ENCODE measurements at regions of chr1 and their contacts with region 1.

Region 1: GRCh38 chr1:200620273-200621131 is at the start of gene KIF14:
- DNase-seq: peak; percentile 97
- ATAC-seq: peak; percentile 99 to 100
- H3K4me3 ChIP-seq: peak within 1 kb of the TSS; percentile 66
- H3K27ac ChIP-seq: peak within 1 kb of the TSS; percentile 74
- H3K4me1 ChIP-seq: peaks cover 18% of the 10 kb centered on the region
- H3K27me3 ChIP-seq: no peaks in the 10 kb centered on the region
- CTCF ChIP-seq: no peak
- total RNA-seq, gene KIF14: 0.44 TPM

Region 2: DNA sequence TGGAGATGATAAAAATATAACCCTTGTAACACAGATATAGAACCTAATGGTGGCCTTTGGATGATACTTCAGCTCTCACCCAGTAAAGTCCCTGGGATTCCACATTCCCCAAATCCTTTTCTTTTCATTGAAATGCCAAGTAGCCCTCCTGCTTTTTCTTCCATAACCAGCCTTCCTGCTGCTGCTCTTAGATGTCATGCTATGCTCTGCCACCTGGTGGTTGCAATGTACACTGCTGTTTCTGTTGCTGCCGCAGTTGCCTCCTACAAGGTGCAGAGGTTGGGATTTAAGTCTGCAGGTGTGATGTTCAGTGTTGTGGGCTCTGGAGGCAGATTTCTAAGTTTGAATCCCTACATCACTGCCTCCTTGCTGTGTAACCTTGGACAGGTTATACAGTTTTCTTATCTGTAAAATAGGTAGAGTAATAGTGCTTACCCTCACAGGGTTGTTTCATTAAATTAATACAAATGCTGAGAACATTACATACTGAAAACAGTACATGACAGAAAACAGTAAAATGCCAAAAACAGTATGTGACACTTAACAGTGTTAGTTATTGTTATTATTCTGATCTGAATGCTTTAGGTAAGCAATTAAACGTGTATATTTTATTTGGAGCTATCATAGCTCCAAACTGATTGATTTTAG is 182.5 kb after region 1 on chr1:
- intact Hi-C with region 1: loop called (anchors 10 kb)
- DNase-seq: peak; percentile 71
- ATAC-seq: peak; percentile 91 to 96
- H3K4me3 ChIP-seq: no peak overlapping the region
- H3K27ac ChIP-seq: no peak overlapping the region
- H3K4me1 ChIP-seq: peaks cover 9% of the 10 kb centered on the region
- H3K27me3 ChIP-seq: no peaks in the 10 kb centered on the region
- CTCF ChIP-seq: peak; percentile 95